ENCODE measurements at regions of chr12 and their contacts with region 1.

Region 1: GRCh38 chr12:48814262-48815125 is 3.8 kb upstream of the CACNB3 start:
- DNase-seq: peak; percentile 88
- ATAC-seq: peak; percentile 83
- H3K4me3 Mint-ChIP-seq: peak overlapping the region; percentile 96
- H3K27ac Mint-ChIP-seq: peak overlapping the region; percentile 73
- H3K4me1 Mint-ChIP-seq: peaks cover 32% of the 10 kb centered on the region
- H3K27me3 Mint-ChIP-seq: peaks cover 25% of the 10 kb centered on the region

Region 2: DNA sequence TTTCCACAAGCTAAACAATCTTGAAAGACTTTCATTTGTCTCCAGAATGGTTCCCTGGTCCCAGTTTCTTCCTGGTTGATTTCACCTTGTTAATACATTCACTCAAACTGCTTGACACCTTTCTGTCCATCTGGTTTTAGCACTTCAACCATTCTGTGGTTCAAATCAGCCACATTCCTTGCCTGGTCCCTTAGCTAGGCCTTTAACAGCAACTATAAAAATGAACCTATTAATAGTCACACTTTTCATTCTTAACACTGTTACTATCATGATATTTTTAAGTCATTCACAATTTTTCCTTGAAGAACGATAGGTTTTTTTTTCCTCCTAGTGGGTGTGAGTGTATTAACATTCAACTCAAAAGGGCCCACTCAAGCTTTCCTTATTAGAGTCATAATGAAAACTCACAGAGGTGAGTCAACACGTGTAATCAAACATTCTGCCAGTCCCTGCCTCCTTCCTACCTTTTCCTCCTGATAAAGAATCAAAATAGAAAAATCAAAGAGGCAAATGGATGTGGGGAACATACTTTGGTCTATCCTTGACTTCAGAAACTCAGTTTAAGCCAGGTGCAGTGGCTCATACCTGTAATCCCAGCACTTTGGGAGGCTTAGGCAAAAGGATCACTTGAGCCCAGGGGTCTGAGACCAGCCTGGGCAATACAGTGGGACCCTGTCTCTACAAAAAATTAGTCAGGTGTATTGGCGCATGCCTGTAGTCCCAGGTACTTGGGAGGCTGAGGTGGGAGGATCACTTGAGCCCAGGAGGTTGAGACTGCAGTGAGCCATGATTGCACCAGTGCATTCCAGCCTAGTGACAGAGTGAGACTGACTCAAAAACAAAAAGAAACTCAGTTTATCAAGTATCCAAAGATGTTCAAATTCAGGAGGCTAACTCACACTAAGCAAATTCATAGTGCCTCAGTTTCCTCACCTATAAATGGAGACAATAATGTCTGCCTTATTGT is 63.4 kb before region 1 on chr12:
- CTCF ChIA-PET with region 1: interaction called, 42 read pairs
- DNase-seq: no peak
- ATAC-seq: peak; percentile 67
- H3K4me3 Mint-ChIP-seq: no peak overlapping the region
- H3K27ac Mint-ChIP-seq: peak overlapping the region; percentile 6
- H3K4me1 Mint-ChIP-seq: peaks cover 12% of the 10 kb centered on the region
- H3K27me3 Mint-ChIP-seq: peaks cover 11% of the 10 kb centered on the region

Region 3: DNA sequence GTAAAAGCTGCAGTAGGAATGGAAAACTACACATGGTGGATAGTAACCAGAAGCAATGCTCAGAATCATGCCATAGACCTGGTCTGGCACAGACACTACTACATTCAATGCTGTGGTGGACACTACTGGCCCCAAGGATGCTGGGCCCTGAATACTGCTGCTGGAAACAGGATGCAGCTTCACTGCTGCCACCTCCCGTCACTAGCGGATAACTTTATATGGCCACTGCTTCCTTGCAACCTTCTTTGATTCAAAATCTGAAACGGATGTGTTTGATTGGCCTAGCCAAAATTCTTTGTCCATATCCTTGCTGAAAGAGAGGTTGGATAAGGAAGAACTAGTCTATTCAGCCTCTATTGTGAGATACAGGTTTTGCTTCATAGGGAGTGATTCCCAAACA is 56.3 kb before region 1 on chr12:
- CTCF ChIA-PET with region 1: interaction called, 42 read pairs
- DNase-seq: no peak
- ATAC-seq: no peak
- H3K4me3 Mint-ChIP-seq: no peak overlapping the region
- H3K27ac Mint-ChIP-seq: no peak overlapping the region
- H3K4me1 Mint-ChIP-seq: no peaks in the 10 kb centered on the region
- H3K27me3 Mint-ChIP-seq: peaks cover 6% of the 10 kb centered on the region

Region 4: GRCh38 chr12:48765753-48766162 is 48.7 kb before region 1 on chr12:
- CTCF ChIA-PET with region 1: interaction called, 11 read pairs
- DNase-seq: peak; percentile 85
- ATAC-seq: peak; percentile 90
- H3K4me3 Mint-ChIP-seq: peak overlapping the region; percentile 35
- H3K27ac Mint-ChIP-seq: peak overlapping the region; percentile 59
- H3K4me1 Mint-ChIP-seq: peaks cover 26% of the 10 kb centered on the region
- H3K27me3 Mint-ChIP-seq: peaks cover 4% of the 10 kb centered on the region

Region 5: GRCh38 chr12:48795480-48796455 is 18.7 kb before region 1 on chr12:
- CTCF ChIA-PET with region 1: interaction called, 55 read pairs
- DNase-seq: peak; percentile 73
- ATAC-seq: peak; percentile 70
- H3K4me3 Mint-ChIP-seq: no peak overlapping the region
- H3K27ac Mint-ChIP-seq: no peak overlapping the region
- H3K4me1 Mint-ChIP-seq: peaks cover 16% of the 10 kb centered on the region
- H3K27me3 Mint-ChIP-seq: peaks cover 15% of the 10 kb centered on the region

Region 6: GRCh38 chr12:48803675-48804074 is 10.8 kb before region 1 on chr12:
- CTCF ChIA-PET with region 1: interaction called, 30 read pairs
- DNase-seq: no peak
- ATAC-seq: no peak
- H3K4me3 Mint-ChIP-seq: no peak overlapping the region
- H3K27ac Mint-ChIP-seq: no peak overlapping the region
- H3K4me1 Mint-ChIP-seq: peaks cover 16% of the 10 kb centered on the region
- H3K27me3 Mint-ChIP-seq: no peaks in the 10 kb centered on the region

Region 7: GRCh38 chr12:48832321-48833060 is 18.0 kb after region 1 on chr12:
- CTCF ChIA-PET with region 1: interaction called, 17 read pairs
- DNase-seq: no peak
- ATAC-seq: no peak
- H3K4me3 Mint-ChIP-seq: no peak overlapping the region
- H3K27ac Mint-ChIP-seq: no peak overlapping the region
- H3K4me1 Mint-ChIP-seq: no peaks in the 10 kb centered on the region
- H3K27me3 Mint-ChIP-seq: no peaks in the 10 kb centered on the region

Region 8: GRCh38 chr12:49079793-49080192 is 265.3 kb after region 1 on chr12:
- CTCF ChIA-PET with region 1: no interaction called
- DNase-seq: no peak
- ATAC-seq: no peak
- H3K4me3 Mint-ChIP-seq: no peak overlapping the region
- H3K27ac Mint-ChIP-seq: no peak overlapping the region
- H3K4me1 Mint-ChIP-seq: peaks cover 3% of the 10 kb centered on the region
- H3K27me3 Mint-ChIP-seq: peaks cover 7% of the 10 kb centered on the region